ENCODE measurements at regions of chr22 and their contacts with region 1.

Region 1: DNA sequence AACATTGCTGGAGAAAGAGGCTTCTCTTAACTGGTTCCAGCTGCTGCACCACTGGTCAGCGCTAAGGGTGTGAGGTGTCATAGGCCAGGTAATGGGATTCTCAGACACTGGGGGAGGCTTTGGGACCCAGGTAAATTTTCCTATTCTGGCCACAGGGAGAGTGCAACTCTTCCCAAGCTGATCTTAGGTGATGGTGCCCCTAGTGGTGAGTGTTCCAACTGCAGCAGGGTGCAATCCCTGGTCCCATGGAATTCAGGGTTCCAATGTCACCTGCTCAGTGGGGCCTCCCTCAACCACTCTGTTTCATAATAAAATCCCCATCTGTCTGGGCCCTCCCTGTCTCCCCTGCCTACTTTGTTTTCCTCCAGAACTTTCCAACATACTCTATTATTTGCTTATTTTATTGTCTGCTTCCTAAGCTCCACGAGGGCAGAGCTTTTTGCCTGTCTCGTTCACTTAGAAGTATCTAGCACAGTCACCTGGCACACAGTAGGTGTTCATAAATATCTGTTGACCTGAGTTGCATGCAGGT is 2.9 kb upstream of the SGSM1 start:
- DNase-seq: peak; percentile 73 to 97
- H3K4me3 ChIP-seq: no peak overlapping the region
- H3K27ac ChIP-seq: no peak overlapping the region
- H3K4me1 ChIP-seq: peaks cover 0 to 6% (median 3%) of the 10 kb centered on the region in 4 experiments; a peak in 6 of 7 replicates
- H3K27me3 ChIP-seq: no peaks in the 10 kb centered on the region
- CTCF ChIP-seq: peak; percentile 90 to 96 (median 95)
- EP300 ChIP-seq: no peak
- POLR2A ChIP-seq: no peak
- RAD21 ChIP-seq: peak; percentile 51 to 67

Region 2: DNA sequence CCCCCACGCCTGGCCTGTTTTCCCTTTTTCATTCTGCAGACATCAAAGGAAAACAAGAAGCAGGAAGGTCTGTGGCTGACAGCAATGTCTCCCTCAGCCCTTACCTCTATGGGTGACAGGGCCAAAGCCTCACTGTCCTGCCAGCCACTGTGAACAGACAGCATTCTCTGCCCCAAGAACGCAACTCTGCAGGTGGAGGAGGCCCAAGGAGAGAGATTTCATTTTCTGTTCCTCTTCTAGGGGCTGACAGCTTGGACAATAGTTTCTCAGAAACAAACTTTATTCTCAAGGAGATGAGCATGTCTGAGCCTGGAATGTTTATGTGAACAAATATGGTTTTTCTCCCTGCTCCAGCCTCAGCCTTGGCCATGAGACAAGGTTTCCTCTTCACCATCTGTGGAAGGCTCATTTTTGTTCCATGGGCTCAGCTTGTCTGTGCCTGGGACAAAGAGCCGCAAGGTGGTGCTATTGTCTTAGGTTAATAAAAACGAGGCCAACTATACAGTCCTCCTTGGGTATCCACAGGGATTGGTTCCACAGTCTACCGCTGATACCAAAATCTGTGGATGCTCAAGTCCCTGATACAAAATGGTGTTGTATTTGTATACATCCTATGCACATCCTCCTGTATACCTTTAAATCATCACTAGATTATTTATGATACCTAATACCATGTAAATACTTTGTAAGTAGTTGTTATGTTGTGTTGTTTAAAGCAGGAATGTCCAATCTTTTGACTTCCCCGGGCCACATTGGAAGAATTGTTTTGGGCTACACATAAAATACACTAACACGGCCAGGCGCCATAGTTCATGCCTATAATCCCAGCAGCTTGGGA is 34.3 kb before region 1 on chr22:
- CTCF ChIA-PET with region 1: interaction called, 66 read pairs
- POLR2A ChIA-PET with region 1: interaction called, 3 read pairs
- DNase-seq: peak in 1 of 2 experiments; percentile 76
- H3K4me3 ChIP-seq: no peak overlapping the region
- H3K27ac ChIP-seq: no peak overlapping the region
- H3K4me1 ChIP-seq: peaks cover 0 to 3% (median 1%) of the 10 kb centered on the region in 4 experiments; a peak in 2 of 7 replicates
- H3K27me3 ChIP-seq: no peaks in the 10 kb centered on the region
- CTCF ChIP-seq: peak; percentile 47 to 82 (median 65)
- EP300 ChIP-seq: no peak
- POLR2A ChIP-seq: no peak
- RAD21 ChIP-seq: peak; percentile 82 to 85

Region 3: DNA sequence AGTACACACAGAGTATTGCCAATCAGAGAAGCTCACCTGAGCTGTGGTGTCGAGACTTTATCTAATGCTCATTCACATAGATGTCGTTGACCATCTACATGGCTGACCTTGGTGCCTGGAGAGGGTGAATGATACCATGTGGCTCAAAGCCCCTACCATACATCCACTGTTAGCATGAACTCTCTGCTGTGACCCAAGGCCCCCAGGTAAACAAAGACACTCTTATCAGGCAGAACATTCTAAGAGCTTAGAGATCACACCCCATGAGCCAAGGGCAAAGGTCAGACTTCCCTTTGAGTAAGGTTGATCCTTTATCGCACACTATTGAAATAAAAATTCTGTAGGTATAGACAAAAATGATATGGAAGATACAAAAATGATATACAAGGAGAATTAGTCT is 13.6 kb before region 1 on chr22:
- CTCF ChIA-PET with region 1: interaction called, 14 read pairs
- POLR2A ChIA-PET with region 1: no interaction called
- DNase-seq: no peak
- H3K4me3 ChIP-seq: no peak overlapping the region
- H3K27ac ChIP-seq: no peak overlapping the region
- H3K4me1 ChIP-seq: no peaks in the 10 kb centered on the region
- H3K27me3 ChIP-seq: no peaks in the 10 kb centered on the region
- CTCF ChIP-seq: no peak
- EP300 ChIP-seq: no peak
- POLR2A ChIP-seq: no peak
- RAD21 ChIP-seq: no peak

Region 4: GRCh38 chr22:24812950-24813775 is 10.1 kb after region 1 on chr22:
- CTCF ChIA-PET with region 1: interaction called, 24 read pairs
- POLR2A ChIA-PET with region 1: no interaction called
- DNase-seq: no peak
- H3K4me3 ChIP-seq: no peak overlapping the region
- H3K27ac ChIP-seq: no peak overlapping the region
- H3K4me1 ChIP-seq: peaks cover 0 to 4% (median 3%) of the 10 kb centered on the region in 4 experiments; a peak in 5 of 7 replicates
- H3K27me3 ChIP-seq: no peaks in the 10 kb centered on the region; a peak in 1 of 7 replicates
- CTCF ChIP-seq: no peak
- EP300 ChIP-seq: no peak
- POLR2A ChIP-seq: no peak
- RAD21 ChIP-seq: no peak

Region 5: GRCh38 chr22:24827296-24827695 is 24.2 kb after region 1 on chr22:
- CTCF ChIA-PET with region 1: interaction called, 25 read pairs
- POLR2A ChIA-PET with region 1: interaction called, 4 read pairs
- DNase-seq: no peak
- H3K4me3 ChIP-seq: no peak overlapping the region
- H3K27ac ChIP-seq: no peak overlapping the region
- H3K4me1 ChIP-seq: peaks cover 4 to 12% (median 11%) of the 10 kb centered on the region in 4 experiments
- H3K27me3 ChIP-seq: no peaks in the 10 kb centered on the region
- CTCF ChIP-seq: no peak
- EP300 ChIP-seq: no peak
- POLR2A ChIP-seq: no peak
- RAD21 ChIP-seq: no peak

Measured in H1 (cell line).